Transverse colon (tissue), 4 donors: ENCODE measurements at regions of chr4 and their contacts with region 1.

Region 1: GRCh38 chr4:87657525-87657924 is 7.4 kb downstream of the DMP1 start:
- DNase-seq: no peak
- H3K4me3 ChIP-seq: no peak overlapping the region
- H3K27ac ChIP-seq: no peak overlapping the region
- H3K4me1 ChIP-seq: peaks cover 0 to 14% (median 2%) of the 10 kb centered on the region in 4 donors
- H3K27me3 ChIP-seq: no peaks in the 10 kb centered on the region
- CTCF ChIP-seq: no peak
- EP300 ChIP-seq: no peak
- POLR2A ChIP-seq: no peak

Region 2: GRCh38 chr4:87985097-87985886 is 327.8 kb after region 1 on chr4:
- in situ Hi-C with region 1: loop called in 1 of 4 experiments (anchors 25 kb)
- intact Hi-C with region 1: no loop called
- DNase-seq: peak; percentile 44
- H3K4me3 ChIP-seq: no peak overlapping the region
- H3K27ac ChIP-seq: no peak overlapping the region
- H3K4me1 ChIP-seq: no peaks in the 10 kb centered on the region
- H3K27me3 ChIP-seq: no peaks in the 10 kb centered on the region
- CTCF ChIP-seq: peak in 4 of 5 experiments; percentile 14 to 46 (median 34)
- EP300 ChIP-seq: no peak
- POLR2A ChIP-seq: no peak